AG04449 (cell line): ENCODE measurements at regions of chr11 and their contacts with region 1.

Region 1: GRCh38 chr11:2151500-2152257 is 9.3 kb downstream of the INS start:
- DNase-seq: no peak
- H3K4me3 ChIP-seq: no peak overlapping the region
- CTCF ChIP-seq: peak; percentile 80

Region 2: DNA sequence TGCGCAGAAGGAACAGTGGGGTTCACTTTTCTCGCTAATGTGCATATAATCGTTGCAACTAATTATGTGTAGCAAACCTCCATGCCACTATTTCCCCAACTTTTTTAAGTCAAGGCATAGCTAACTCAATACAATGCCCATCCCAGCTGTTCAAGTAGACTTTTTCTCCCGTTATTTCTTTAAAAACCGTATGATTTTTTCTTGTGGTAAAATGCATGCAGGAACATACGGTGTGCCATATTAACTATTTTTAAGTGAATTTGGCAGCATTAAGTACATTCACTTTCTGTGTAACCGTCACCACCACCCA is 576.8 kb before region 1 on chr11:
- CTCF ChIA-PET with region 1: no interaction called
- POLR2A ChIA-PET with region 1: no interaction called
- DNase-seq: no peak
- H3K4me3 ChIP-seq: no peak overlapping the region
- CTCF ChIP-seq: no peak

Region 3: DNA sequence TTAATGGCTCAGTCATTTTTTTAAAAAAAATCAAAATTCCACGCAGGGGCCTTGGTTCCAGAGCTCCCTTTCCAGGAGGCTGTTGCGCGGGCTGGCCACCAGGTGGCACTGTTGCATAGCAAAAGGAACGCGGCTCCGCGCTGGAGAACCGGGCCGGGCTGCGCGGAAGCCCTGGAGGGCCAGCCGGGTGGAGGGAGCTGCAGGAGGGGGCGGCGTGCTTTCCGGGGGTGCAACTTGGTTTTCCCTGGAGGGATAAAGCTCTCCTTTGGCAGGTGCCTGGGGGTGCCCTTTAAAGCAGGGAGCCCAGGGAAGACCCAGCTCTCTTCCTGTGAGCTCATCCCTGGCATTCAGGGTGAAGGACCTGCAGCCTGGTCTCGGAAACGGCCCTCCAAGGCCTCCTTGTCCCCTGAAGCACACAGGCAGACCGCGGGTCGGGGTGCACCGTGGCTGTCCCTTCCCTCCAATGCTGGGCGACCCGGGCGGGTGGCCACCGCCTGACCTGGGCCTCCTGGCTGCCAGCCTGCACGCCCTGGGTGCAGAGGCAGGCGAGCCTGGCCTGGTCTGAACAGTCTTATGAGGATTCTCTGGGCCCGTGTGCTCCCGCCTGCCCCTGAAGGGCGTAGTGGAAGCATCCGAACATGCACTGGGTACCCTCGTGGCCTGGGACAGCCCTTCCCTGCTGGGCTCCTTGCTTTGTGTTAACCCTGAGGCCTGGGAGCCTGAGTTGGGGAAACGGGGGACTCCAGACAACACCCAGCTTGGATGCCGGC is 498.7 kb before region 1 on chr11:
- CTCF ChIA-PET with region 1: interaction called, 230 read pairs
- POLR2A ChIA-PET with region 1: interaction called, 4 read pairs
- DNase-seq: no peak
- H3K4me3 ChIP-seq: no peak overlapping the region
- CTCF ChIP-seq: peak; percentile 93

Region 4: DNA sequence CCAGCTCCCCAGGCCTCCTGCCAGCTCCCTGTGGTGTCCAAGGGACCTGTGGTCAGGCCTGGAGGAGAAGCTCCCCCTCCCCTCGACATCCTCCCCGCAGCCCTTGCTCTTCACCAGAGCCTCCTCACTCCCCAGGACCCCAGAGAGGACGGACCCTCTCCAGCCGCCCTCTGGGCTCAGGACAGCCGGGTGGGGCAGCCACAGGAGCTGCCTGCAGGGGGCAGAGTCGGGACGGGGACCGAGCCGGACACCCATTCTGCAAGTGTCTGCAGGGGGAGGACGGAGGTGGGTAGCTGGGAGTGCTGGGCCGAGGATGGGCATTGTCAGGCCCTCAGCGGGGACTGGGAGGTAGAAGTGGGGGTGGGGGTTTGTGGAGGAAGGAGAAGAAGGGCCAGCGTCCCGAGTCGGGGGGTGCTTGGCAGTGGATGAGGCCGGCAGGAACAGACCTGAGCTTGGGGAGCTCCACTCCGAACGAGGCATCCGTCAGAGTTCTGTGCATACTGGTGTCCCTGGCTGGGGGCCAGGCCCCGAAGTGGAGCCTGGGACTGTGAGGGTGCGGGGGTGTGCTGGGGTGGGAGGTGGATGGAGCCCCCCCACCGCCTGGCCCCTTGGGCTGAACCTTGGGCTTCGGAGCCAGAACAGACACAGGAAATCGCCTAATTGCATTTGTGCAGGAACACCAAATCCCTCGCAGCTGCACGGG is 275.2 kb before region 1 on chr11:
- CTCF ChIA-PET with region 1: interaction called, 86 read pairs
- POLR2A ChIA-PET with region 1: interaction called, 3 read pairs
- DNase-seq: no peak
- H3K4me3 ChIP-seq: no peak overlapping the region
- CTCF ChIP-seq: peak; percentile 65

Region 5: DNA sequence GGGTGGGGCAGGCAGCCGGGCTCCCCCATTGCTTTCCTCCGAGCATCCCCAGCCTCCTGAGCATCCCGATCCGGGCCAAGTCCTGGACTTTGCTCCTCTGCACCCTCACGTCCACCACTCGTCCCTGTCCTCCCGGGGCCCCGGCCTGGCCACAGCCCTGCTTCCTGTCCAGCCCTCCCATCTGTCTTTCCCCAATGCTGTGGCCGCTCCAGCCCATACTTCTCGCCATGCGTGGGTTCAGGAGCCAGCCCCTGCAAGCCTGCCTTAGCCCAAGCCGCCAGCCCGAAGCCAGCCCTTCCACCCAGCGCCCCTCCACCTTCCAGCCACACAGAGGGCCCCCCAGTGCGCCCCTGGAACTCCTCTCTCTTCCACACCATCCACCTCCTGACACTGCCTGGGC is 180.7 kb before region 1 on chr11:
- CTCF ChIA-PET with region 1: interaction called, 20 read pairs
- POLR2A ChIA-PET with region 1: no interaction called
- DNase-seq: no peak
- H3K4me3 ChIP-seq: no peak overlapping the region
- CTCF ChIP-seq: no peak

Region 6: DNA sequence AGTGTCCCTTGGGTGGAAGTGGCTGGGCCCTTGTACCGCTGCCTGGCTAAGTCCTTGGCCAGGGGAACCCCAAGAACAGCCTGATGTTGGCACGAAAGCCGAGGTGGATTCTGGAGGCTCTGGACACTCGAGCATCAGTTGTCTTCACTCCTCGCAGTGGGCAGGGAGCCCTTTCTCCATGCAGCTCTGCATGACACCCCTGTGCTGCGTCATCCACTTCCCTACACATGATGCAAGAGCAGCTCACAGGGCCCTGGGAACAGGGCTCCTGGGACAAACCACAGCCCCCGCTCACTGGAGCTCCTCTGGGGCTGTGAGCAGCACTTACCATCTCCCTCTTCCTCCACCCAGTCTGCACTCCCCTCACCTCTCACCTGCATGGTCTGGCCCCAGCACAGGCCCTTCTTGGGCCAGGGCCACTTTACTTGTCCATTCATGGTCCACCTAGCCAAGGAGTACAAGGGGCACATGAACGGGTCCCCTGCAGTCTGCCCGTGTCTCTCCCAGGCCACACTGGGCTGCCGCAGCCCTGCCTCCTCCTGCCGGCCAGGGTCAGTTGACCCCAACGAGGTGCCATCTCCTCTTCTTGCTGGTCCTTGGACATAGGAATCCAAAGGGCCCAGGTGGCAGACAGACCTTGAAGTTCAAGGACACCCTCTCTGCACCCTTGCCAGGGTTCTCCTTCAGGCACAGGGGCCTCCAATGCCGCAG is 79.0 kb before region 1 on chr11:
- CTCF ChIA-PET with region 1: interaction called, 25 read pairs
- POLR2A ChIA-PET with region 1: no interaction called
- DNase-seq: no peak
- H3K4me3 ChIP-seq: no peak overlapping the region
- CTCF ChIP-seq: no peak

Region 7: DNA sequence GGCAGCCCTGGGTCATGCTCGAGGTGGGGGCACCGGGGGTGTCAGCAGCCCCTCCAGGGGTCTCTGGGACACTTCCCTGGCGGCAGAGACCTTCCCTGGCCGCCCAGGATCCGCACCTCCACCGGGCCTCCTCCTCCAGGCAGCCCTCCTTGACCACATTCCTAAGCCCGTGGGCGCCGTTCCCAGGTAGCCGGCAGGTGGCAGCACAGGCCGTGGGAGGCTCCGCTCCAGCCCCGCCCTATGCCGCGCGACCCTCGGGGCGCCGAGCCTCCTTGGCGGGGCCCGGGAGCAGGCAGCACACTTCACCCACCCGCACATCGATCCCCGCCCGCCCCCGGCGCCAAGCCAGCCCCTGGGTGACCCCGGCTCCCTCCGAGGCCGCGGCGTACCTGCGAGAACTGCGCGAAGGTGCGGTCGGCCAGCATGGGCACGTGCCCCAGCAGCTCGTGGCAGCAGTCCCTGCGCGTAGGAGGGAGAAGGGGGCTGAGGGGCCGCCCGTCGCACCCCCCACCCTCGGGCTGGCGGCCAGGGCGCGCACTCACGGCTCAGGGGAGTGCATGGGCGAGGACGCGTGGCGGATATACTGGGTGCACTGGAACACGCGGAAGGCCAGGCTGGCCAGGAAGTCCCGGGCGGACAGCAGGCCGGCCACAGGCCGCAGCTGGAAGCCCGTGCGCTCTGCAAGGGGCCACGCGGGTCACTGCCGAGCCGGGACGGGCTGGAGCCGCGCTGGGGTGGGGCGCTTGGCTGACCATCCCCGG is 14.6 kb after region 1 on chr11:
- CTCF ChIA-PET with region 1: interaction called, 33 read pairs
- POLR2A ChIA-PET with region 1: no interaction called
- DNase-seq: no peak
- H3K4me3 ChIP-seq: no peak overlapping the region
- CTCF ChIP-seq: peak; percentile 59

Region 8: DNA sequence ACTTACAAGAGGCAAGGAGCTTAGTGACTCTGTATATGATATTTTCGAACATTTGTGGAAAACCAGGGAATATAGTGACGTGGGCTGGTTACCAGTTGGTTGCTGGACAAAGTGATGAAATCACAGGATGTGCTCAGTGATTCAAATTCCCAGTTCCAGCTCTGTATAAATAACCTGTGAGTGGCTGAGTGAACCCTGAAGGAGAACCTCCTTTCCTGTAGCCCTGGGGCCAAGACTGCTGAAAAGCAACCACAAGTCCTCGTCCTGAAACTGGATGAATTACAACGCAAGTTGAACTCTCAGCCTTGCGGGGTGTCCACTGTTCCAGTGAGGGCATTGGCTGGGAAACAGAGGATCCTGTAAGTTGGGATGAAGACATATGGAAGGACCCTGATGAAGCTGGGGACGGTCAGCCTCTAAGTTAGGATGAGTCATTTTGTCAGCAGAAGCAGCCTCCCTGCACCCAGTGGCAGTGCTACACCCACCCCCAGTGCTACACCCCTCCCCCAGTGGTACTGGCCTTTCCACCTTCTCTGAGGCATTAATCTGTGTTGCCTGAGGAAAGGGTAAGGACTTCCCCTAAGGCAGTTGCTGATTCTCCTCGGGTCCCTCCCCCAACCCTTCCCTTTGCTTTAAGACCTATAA is 203.4 kb after region 1 on chr11:
- CTCF ChIA-PET with region 1: no interaction called
- POLR2A ChIA-PET with region 1: no interaction called
- DNase-seq: no peak
- H3K4me3 ChIP-seq: no peak overlapping the region
- CTCF ChIP-seq: no peak